Left cardiac atrium (tissue), 4 donors: ENCODE measurements at regions of chr4 and their contacts with region 1.

Region 1: DNA sequence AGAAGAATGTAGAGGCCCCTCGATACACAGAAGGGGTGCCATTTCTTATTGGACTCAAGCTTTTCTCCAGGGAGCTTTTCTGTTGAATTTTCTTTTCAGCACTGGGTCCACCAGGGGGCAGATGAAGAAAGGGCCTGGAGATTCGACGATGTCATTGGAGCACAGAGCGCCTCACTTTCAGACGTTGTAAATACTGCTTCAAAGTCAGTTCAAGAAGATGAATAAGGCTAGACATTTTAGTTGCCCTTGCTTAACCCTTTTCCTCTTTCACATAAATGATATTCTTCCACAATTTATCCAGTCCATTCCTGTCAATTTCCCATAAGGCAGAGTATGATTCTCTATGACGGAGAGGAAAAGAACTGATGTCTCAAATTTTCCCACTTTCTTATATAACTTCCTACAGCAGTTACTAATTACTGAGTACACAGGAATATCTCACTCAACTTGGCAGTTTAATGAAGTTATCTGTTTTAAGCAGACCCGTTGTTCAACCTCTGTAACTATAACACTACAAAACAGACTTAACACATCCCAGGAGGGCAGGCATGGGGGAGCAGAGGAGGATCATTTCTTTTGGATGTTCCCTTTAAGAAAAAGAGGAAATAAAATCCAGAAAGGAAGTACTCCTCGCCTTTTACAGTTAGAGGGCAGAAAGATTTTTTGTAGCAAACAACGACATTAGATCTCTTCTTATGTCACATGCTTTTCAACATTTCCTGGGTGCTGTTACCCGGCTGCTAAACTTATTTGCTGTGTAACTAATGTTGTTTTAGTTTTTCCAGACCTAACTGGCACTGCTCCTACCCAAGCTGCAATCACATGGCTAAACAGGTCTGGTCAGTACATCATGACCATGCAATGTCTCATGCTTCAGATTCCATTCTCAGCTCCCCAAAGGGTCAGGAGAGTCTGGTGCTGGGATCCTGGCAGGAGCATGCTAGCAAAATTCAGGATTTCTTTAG is 12.2 kb upstream of the CENPU start:
- DNase-seq: peak; percentile 82
- ATAC-seq: peak; percentile 78 to 85

Region 2: DNA sequence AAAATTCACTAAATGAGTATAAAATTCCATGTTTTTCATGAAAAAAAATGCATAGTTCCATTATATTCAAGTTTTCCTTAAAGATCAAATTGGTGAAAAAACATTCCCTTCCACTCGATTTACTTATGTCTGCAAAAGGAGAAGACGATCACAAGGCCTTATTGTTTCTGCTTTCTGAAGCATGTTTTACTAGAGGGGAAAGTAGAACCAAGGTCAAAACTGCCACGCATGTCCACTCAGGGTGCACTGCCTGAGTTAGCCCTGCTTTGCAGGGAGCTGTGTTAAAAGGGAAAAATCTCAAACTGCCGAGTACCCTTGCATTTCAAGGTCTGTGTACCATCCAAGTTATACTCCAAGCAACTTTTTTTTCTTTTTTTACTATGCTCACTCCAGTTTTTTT is 1029.8 kb before region 1 on chr4:
- intact Hi-C with region 1: no loop called
- DNase-seq: no peak
- ATAC-seq: no peak

Region 3: GRCh38 chr4:184506527-184507121 is 239.5 kb before region 1 on chr4:
- intact Hi-C with region 1: no loop called
- DNase-seq: no peak
- ATAC-seq: peak; percentile 25 to 44

Region 4: GRCh38 chr4:184815046-184815877 is 69.1 kb after region 1 on chr4:
- intact Hi-C with region 1: loop called in 1 of 2 experiments (anchors 5 kb)
- DNase-seq: peak; percentile 86
- ATAC-seq: peak; percentile 72 to 86

Region 5: GRCh38 chr4:184983672-184984356 is 237.7 kb after region 1 on chr4:
- intact Hi-C with region 1: loop called in 1 of 2 experiments (anchors 2 kb)
- DNase-seq: peak; percentile 61
- ATAC-seq: peak; percentile 76 to 86